ENCODE measurements at regions of chr3 and their contacts with region 1.

Region 1: GRCh38 chr3:64533617-64534317 is 154.0 kb downstream of the ADAMTS9 start:
- DNase-seq: peak; percentile 82
- H3K4me3 ChIP-seq: no peak overlapping the region
- H3K27ac ChIP-seq: peak overlapping the region in 1 of 2 experiments; percentile 74; a peak in 2 of 4 replicates
- H3K4me1 ChIP-seq: peaks cover 0 to 6% of the 10 kb centered on the region in 2 experiments; a peak in 2 of 4 replicates
- H3K27me3 ChIP-seq: no peaks in the 10 kb centered on the region
- CTCF ChIP-seq: peak; percentile 92
- EP300 ChIP-seq: 0 out of 4 replicates have a peak, but pooled peaks of 1 of the 2 experiments have one; percentile 11
- RAD21 ChIP-seq: peak; percentile 93

Region 2: GRCh38 chr3:64408770-64409169 is 125.0 kb before region 1 on chr3:
- CTCF ChIA-PET with region 1: no interaction called
- POLR2A ChIA-PET with region 1: no interaction called
- DNase-seq: no peak
- H3K4me3 ChIP-seq: no peak overlapping the region
- H3K27ac ChIP-seq: no peak overlapping the region
- H3K4me1 ChIP-seq: no peaks in the 10 kb centered on the region
- H3K27me3 ChIP-seq: no peaks in the 10 kb centered on the region
- CTCF ChIP-seq: no peak
- EP300 ChIP-seq: no peak
- RAD21 ChIP-seq: no peak

Region 3: DNA sequence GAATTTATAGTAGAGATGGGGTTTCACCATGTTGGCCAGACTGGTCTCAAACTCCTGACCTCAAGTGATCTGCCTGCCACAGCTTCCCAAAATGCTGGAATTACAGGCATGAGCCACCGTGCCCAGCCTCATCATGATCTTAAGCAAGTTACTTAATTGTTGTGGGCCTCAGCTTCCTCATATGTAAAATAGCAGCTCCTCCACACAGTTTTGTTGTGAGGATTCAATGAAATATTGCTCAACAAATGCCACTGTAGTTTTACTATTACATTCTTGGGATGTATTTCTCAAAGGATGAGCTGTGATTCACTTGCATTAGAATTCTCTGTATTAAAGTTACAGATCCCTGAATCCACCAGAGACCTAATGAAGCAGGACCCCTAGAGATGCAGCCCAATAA is 14.8 kb before region 1 on chr3:
- CTCF ChIA-PET with region 1: interaction called, 22 read pairs
- POLR2A ChIA-PET with region 1: no interaction called
- DNase-seq: no peak
- H3K4me3 ChIP-seq: no peak overlapping the region
- H3K27ac ChIP-seq: no peak overlapping the region
- H3K4me1 ChIP-seq: no peaks in the 10 kb centered on the region
- H3K27me3 ChIP-seq: no peaks in the 10 kb centered on the region
- CTCF ChIP-seq: no peak
- EP300 ChIP-seq: no peak
- RAD21 ChIP-seq: no peak

Region 4: DNA sequence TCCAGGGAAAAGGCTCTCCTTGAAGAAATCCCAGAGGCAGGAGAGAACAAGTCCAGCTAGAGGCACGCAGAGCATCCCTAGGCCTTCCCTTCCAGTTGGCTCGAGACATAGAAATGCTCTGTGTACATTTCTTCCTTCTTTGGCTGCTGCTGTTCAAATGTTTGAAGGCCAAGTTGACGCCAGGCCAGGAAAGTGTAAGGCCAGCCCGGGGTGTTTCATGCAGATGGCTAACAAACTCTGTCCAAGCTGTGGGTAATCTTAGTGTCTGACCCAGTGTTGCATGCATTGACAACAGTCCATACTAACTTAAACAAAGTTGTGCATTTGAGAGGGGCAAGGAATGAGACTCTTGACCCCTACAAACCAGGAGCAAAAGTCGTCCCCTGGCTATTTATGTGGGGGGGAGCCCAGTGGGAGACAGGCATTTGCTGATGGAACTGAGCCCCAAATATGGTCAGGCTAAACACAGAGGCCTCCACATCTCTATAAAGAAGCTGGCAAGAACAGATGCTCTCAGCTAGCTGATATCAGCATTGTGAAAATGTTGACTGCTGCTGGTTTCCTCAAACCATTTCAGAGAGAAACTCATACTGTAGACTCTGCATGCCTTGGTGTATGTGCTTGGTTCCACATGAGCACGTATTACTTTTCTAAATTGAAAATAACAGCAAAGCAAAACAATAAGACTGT is 14.6 kb after region 1 on chr3:
- CTCF ChIA-PET with region 1: interaction called, 20 read pairs
- POLR2A ChIA-PET with region 1: no interaction called
- DNase-seq: no peak
- H3K4me3 ChIP-seq: no peak overlapping the region
- H3K27ac ChIP-seq: peak overlapping the region in 1 of 2 experiments; percentile 25; a peak in 1 of 4 replicates
- H3K4me1 ChIP-seq: peaks cover 0 to 15% of the 10 kb centered on the region in 2 experiments; a peak in 1 of 4 replicates
- H3K27me3 ChIP-seq: no peaks in the 10 kb centered on the region
- CTCF ChIP-seq: no peak
- EP300 ChIP-seq: no peak
- RAD21 ChIP-seq: no peak

Region 5: GRCh38 chr3:64554081-64554920 is 20.5 kb after region 1 on chr3:
- CTCF ChIA-PET with region 1: interaction called, 20 read pairs
- POLR2A ChIA-PET with region 1: no interaction called
- DNase-seq: no peak
- H3K4me3 ChIP-seq: no peak overlapping the region
- H3K27ac ChIP-seq: no peak overlapping the region; a peak in 1 of 4 replicates
- H3K4me1 ChIP-seq: peaks cover 0 to 11% of the 10 kb centered on the region in 2 experiments; a peak in 1 of 4 replicates
- H3K27me3 ChIP-seq: no peaks in the 10 kb centered on the region
- CTCF ChIP-seq: no peak
- EP300 ChIP-seq: no peak
- RAD21 ChIP-seq: no peak

Region 6: DNA sequence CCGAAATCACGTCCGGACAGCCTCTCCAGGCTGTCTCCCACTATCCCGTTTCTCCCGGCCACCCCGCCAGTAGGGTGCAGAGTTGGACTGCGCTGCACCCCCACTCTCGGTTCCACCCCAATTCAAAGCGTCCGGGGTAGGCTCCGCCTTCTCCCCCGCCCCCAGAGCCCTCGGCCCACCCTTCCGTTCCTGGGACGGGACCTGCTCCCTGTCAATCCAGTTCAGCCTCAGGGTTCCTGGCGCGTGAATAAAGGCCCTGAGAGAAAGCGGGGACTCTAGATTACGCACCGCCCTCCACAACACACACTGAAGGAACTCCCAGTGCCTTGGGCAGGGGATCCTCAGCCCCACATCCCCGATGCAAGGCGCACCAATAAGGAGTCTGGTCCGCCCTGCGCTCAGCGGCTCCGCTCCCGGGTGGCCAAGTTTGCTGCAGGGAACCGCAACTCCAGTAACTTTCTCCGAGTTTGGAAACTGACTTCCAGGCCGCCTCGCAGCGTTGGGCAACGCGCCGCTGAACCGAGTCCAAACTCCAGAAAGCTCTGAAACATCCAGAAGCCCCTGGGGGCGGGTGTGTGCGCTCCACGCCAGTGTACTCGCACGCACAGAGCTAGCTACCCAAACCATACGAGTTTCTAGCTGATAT is 152.2 kb after region 1 on chr3:
- CTCF ChIA-PET with region 1: interaction called, 17 read pairs
- POLR2A ChIA-PET with region 1: interaction called, 4 read pairs
- DNase-seq: peak; percentile 84
- H3K4me3 ChIP-seq: peak overlapping the region; percentile 83 to 90
- H3K27ac ChIP-seq: peak overlapping the region; percentile 87 to 98
- H3K4me1 ChIP-seq: peaks cover 0 to 21% of the 10 kb centered on the region in 2 experiments; a peak in 3 of 4 replicates
- H3K27me3 ChIP-seq: no peaks in the 10 kb centered on the region
- CTCF ChIP-seq: peak; percentile 62
- EP300 ChIP-seq: peak in 1 of 2 experiments; percentile 51; a peak in 1 of 4 replicates
- RAD21 ChIP-seq: peak; percentile 66

Region 7: DNA sequence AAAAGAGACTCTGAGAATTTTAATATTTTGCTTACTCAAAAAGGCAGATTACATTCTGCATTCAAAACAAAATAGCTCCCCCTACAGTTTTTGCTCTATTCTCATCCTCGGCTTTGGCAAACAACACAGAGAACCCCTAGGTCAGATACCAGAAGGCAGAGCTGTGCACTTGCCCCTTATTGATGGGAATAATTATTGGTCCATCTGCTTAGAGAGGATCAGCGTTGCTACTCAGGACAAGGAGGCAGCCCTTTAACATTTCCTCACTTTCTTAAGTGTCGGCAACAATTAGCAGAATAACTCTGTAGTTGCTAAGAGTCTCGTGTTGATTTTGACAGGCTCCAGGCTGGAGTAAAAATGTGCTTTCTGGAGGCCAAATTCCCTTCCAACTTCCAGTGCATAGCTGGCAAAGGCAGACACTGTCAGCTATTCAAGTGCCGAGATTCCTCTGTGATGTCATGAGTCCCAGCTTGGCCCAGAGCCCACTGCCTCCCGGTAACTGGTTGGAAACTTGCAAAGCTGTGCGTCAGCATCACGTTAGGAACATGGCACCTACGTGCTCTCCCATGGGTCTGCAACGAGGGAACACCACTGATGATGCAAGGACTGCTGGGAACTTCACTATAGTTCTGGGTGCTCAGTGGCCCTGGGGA is 636.7 kb after region 1 on chr3:
- CTCF ChIA-PET with region 1: interaction called, 22 read pairs
- POLR2A ChIA-PET with region 1: no interaction called
- DNase-seq: peak; percentile 43
- H3K4me3 ChIP-seq: no peak overlapping the region
- H3K27ac ChIP-seq: peak overlapping the region in 1 of 2 experiments; percentile 86; a peak in 2 of 4 replicates
- H3K4me1 ChIP-seq: peaks cover 0 to 18% of the 10 kb centered on the region in 2 experiments; a peak in 2 of 4 replicates
- H3K27me3 ChIP-seq: no peaks in the 10 kb centered on the region
- CTCF ChIP-seq: peak; percentile 66
- EP300 ChIP-seq: peak in 1 of 2 experiments; percentile 53; a peak in 1 of 4 replicates
- RAD21 ChIP-seq: peak; percentile 88

Region 8: GRCh38 chr3:65412588-65412987 is 878.8 kb after region 1 on chr3:
- CTCF ChIA-PET with region 1: interaction called, 12 read pairs
- POLR2A ChIA-PET with region 1: no interaction called
- DNase-seq: no peak
- H3K4me3 ChIP-seq: no peak overlapping the region
- H3K27ac ChIP-seq: peak overlapping the region in 1 of 2 experiments; percentile 25; a peak in 1 of 4 replicates
- H3K4me1 ChIP-seq: peaks cover 0 to 4% of the 10 kb centered on the region in 2 experiments; a peak in 1 of 4 replicates
- H3K27me3 ChIP-seq: no peaks in the 10 kb centered on the region
- CTCF ChIP-seq: no peak
- EP300 ChIP-seq: no peak
- RAD21 ChIP-seq: peak; percentile 63